Naive thymus-derived CD4-positive, alpha-beta T cell (primary cell): ENCODE measurements at regions of chr19 and their contacts with region 1.

Region 1: GRCh38 chr19:41883821-41884733 is 1.1 kb downstream of the ARHGEF1 start:
- DNase-seq: peak; percentile 69 to 91 (median 79)
- ATAC-seq: peak; percentile 82
- H3K4me3 ChIP-seq: peak overlapping the region; percentile 99
- H3K4me3 Mint-ChIP-seq: peak overlapping the region; percentile 92 to 100 (median 98)
- H3K27ac ChIP-seq: peak overlapping the region; percentile 84
- H3K27ac Mint-ChIP-seq: peak overlapping the region; percentile 93 to 99 (median 98)
- H3K4me1 ChIP-seq: peaks cover 34 to 44% of the 10 kb centered on the region in 2 donors
- H3K4me1 Mint-ChIP-seq: peaks cover 41 to 58% (median 51%) of the 10 kb centered on the region in 7 donors
- H3K27me3 ChIP-seq: no peaks in the 10 kb centered on the region
- H3K27me3 Mint-ChIP-seq: no peaks in the 10 kb centered on the region

Region 2: DNA sequence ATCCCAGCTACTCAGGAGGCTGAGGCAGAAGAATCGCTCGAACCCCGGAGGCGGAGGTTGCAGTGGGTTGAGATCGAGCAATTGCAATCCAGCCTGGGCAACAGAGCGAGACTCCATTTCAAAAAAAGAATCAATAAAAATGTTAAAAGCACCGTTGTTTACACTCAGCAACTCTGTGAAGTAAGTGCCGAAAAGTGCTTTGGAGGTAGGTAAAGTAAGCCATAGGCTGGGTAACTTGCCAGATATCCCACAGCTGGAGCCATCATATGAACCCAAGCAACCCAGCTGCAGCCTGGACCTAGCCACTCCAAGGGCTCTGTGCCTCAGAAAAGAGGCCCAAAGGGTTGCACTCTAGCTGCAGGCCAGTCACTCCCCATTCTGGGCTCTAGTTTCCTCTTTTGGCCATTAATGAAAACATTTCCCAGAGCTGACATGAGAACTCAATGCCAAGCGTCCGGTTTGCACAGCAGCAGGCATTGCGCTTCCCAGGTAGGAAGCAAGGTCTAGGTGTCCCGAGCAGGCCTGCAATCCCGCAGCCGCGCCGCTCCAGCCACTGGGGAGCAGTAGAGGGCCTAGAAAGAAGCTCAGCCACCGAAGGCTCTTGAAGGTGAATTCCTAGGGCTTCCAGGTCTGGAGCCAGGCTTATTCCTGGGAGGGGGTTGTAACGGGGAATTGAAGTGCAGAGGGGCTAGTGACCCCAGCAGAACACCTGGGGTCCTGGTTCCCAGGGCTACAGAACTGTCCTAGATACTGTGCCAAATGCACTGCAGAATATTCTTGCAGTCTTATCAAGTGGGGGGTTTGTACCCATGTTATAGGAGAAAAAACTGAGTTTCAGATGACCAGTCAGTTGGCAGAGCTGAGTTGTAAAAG is 11.1 kb before region 1 on chr19:
- CTCF ChIA-PET with region 1: interaction called, 151 read pairs
- POLR2A ChIA-PET with region 1: interaction called, 565 read pairs
- intact Hi-C with region 1: loop called (anchors 1 kb)
- DNase-seq: peak; percentile 58 to 72 (median 65)
- ATAC-seq: peak; percentile 20
- H3K4me3 ChIP-seq: no peak overlapping the region
- H3K4me3 Mint-ChIP-seq: peak overlapping the region; percentile 1 to 93 (median 67)
- H3K27ac ChIP-seq: peak overlapping the region; percentile 74
- H3K27ac Mint-ChIP-seq: peak overlapping the region; percentile 91 to 99 (median 99)
- H3K4me1 ChIP-seq: peaks cover 82 to 91% of the 10 kb centered on the region in 2 donors
- H3K4me1 Mint-ChIP-seq: peaks cover 45 to 93% (median 79%) of the 10 kb centered on the region in 7 donors
- H3K27me3 ChIP-seq: no peaks in the 10 kb centered on the region
- H3K27me3 Mint-ChIP-seq: no peaks in the 10 kb centered on the region

Region 3: DNA sequence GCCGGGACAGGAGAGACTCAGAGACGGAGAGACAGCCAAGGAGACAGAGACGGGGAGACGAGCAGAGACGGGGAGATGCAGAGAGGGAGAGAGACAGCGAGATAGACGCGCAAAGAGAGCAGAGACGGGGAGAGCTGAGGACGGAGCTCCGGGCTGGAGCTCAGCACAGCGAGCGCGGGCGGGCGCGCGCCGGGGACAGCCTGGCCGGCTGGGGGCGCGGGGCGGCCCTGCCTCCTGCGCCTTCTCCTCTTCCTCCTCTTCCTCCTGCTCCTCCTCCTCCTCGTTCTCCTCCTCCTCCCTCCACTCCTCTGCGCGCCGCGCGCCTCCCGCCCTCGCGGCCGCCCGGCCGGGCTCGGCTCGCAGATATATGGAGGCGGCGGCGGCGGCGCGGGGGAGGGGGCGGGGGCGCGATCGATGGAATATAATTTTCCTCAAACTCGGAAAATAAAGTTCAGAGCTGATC is 44.2 kb after region 1 on chr19 and contains the start of gene ERFL:
- CTCF ChIA-PET with region 1: interaction called, 3 read pairs
- POLR2A ChIA-PET with region 1: interaction called, 82 read pairs
- intact Hi-C with region 1: loop called in 1 of 2 experiments (anchors 1 kb)
- DNase-seq: peak in 2 of 9 donors; percentile 32 to 53
- ATAC-seq: peak; percentile 50
- H3K4me3 ChIP-seq: peak within 1 kb of the TSS; percentile 93
- H3K4me3 Mint-ChIP-seq: peak within 1 kb of the TSS in 6 of 10 donors; percentile 88 to 99 (median 91)
- H3K27ac ChIP-seq: peak within 1 kb of the TSS; percentile 70
- H3K27ac Mint-ChIP-seq: peak within 1 kb of the TSS; percentile 75 to 96 (median 90)
- H3K4me1 ChIP-seq: peaks cover 17 to 18% of the 10 kb centered on the region in 2 donors
- H3K4me1 Mint-ChIP-seq: peaks cover 23 to 41% (median 29%) of the 10 kb centered on the region in 7 donors
- H3K27me3 ChIP-seq: no peaks in the 10 kb centered on the region
- H3K27me3 Mint-ChIP-seq: peaks cover 0 to 9% (median 3%) of the 10 kb centered on the region in 5 donors
- total RNA-seq, gene ERFL: 3.0 to 15.0 (median 8.0) TPM

Region 4: GRCh38 chr19:41951686-41952172 is 67.7 kb after region 1 on chr19:
- CTCF ChIA-PET with region 1: no interaction called
- POLR2A ChIA-PET with region 1: interaction called, 106 read pairs
- intact Hi-C with region 1: loop called (anchors 1 kb)
- DNase-seq: peak; percentile 63 to 93 (median 78)
- ATAC-seq: peak; percentile 95
- H3K4me3 ChIP-seq: no peak overlapping the region
- H3K4me3 Mint-ChIP-seq: peak overlapping the region in 2 of 10 donors; percentile 54 to 67
- H3K27ac ChIP-seq: peak overlapping the region; percentile 15
- H3K27ac Mint-ChIP-seq: peak overlapping the region in 8 of 9 donors; percentile 48 to 89 (median 63)
- H3K4me1 ChIP-seq: peaks cover 0 to 15% of the 10 kb centered on the region in 2 donors
- H3K4me1 Mint-ChIP-seq: peaks cover 11 to 19% (median 12%) of the 10 kb centered on the region in 7 donors
- H3K27me3 ChIP-seq: no peaks in the 10 kb centered on the region
- H3K27me3 Mint-ChIP-seq: no peaks in the 10 kb centered on the region

Region 5: GRCh38 chr19:42219812-42220750 is 336.0 kb after region 1 on chr19 and contains the start of gene ZNF526:
- CTCF ChIA-PET with region 1: no interaction called
- POLR2A ChIA-PET with region 1: no interaction called
- intact Hi-C with region 1: loop called in 1 of 2 experiments (anchors 10 kb)
- DNase-seq: peak; percentile 92 to 97 (median 96)
- ATAC-seq: peak; percentile 88
- H3K4me3 ChIP-seq: peak within 1 kb of the TSS; percentile 72
- H3K4me3 Mint-ChIP-seq: peak within 1 kb of the TSS; percentile 95 to 99 (median 98)
- H3K27ac ChIP-seq: peak within 1 kb of the TSS; percentile 88
- H3K27ac Mint-ChIP-seq: peak within 1 kb of the TSS; percentile 88 to 98 (median 95)
- H3K4me1 ChIP-seq: peaks cover 37 to 43% of the 10 kb centered on the region in 2 donors
- H3K4me1 Mint-ChIP-seq: peaks cover 46 to 62% (median 55%) of the 10 kb centered on the region in 7 donors
- H3K27me3 ChIP-seq: no peaks in the 10 kb centered on the region
- H3K27me3 Mint-ChIP-seq: peaks cover 0 to 3% (median 0%) of the 10 kb centered on the region in 5 donors
- total RNA-seq, gene ZNF526: 8.6 to 25.2 (median 22.7) TPM